ENCODE measurements at regions of chr20 and their contacts with region 1.

Region 1: DNA sequence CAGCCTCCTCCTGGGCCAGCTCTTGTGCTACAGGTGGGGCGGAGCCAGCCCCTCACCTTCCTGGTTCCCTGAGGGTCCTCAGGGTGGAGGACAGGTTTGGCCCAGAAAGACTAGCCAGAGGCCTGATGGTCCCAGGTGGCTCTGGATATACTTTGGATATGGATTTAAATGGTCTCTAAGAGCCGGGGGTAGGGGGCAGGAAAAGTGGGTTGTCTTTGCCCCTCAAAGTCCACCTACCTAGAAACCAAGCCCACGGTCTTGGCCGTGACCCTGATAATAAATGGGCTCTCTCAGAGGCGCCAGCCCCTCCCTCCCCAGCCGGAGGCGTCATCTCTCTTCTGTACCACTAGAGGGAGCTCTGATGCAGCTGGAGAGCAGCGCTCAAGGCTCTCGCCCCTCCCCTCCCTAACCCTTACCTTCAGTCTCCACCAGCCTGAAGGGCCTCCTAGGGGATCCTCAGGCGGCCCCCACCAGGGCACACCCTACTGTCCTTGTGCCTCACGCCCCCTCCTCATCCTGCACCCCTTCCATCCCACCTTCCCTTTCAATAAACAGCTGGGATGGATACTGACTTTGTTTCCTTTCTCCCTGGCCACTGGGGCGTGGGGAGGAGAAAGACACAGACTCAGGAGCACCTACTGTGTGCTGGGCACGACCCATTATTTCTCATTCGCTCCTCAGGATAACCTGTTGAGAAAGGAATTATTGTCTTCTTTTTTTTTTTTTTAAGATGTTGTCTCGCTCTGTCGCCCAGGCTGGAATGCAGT is 7.6 kb downstream of the NRSN2 start:
- DNase-seq: peak; percentile 70 to 71
- H3K4me3 ChIP-seq: no peak overlapping the region
- H3K27ac ChIP-seq: no peak overlapping the region
- H3K4me1 ChIP-seq: peaks cover 14 to 22% of the 10 kb centered on the region in 2 donors
- H3K27me3 ChIP-seq: no peaks in the 10 kb centered on the region
- CTCF ChIP-seq: peak; percentile 83 to 96 (median 94)
- POLR2A ChIP-seq: no peak

Region 2: GRCh38 chr20:407133-407952 is 52.9 kb after region 1 on chr20:
- intact Hi-C with region 1: loop called (anchors 10 kb)
- DNase-seq: peak; percentile 73 to 78
- H3K4me3 ChIP-seq: peak overlapping the region in 2 of 3 donors; percentile 36 to 98
- H3K27ac ChIP-seq: peak overlapping the region in 2 of 3 donors; percentile 4 to 96
- H3K4me1 ChIP-seq: peaks cover 8 to 19% of the 10 kb centered on the region in 2 donors
- H3K27me3 ChIP-seq: no peaks in the 10 kb centered on the region
- CTCF ChIP-seq: peak in 3 of 6 experiments; percentile 2 to 7 (median 3)
- POLR2A ChIP-seq: peak in 1 of 2 donors; percentile 50

Region 3: GRCh38 chr20:431012-431904 is 76.8 kb after region 1 on chr20:
- intact Hi-C with region 1: loop called (anchors 10 kb)
- DNase-seq: peak; percentile 89 to 90
- H3K4me3 ChIP-seq: no peak overlapping the region
- H3K27ac ChIP-seq: no peak overlapping the region
- H3K4me1 ChIP-seq: no peaks in the 10 kb centered on the region
- H3K27me3 ChIP-seq: no peaks in the 10 kb centered on the region
- CTCF ChIP-seq: peak; percentile 24 to 93 (median 74)
- POLR2A ChIP-seq: no peak

Region 4: GRCh38 chr20:478949-479429 is 124.5 kb after region 1 on chr20:
- intact Hi-C with region 1: loop called (anchors 5 kb)
- DNase-seq: no peak
- H3K4me3 ChIP-seq: no peak overlapping the region
- H3K27ac ChIP-seq: no peak overlapping the region
- H3K4me1 ChIP-seq: no peaks in the 10 kb centered on the region
- H3K27me3 ChIP-seq: no peaks in the 10 kb centered on the region
- CTCF ChIP-seq: peak in 5 of 6 experiments; percentile 26 to 60 (median 54)
- POLR2A ChIP-seq: no peak

Region 5: GRCh38 chr20:517221-517620 is 162.7 kb after region 1 on chr20:
- intact Hi-C with region 1: no loop called
- DNase-seq: no peak
- H3K4me3 ChIP-seq: no peak overlapping the region
- H3K27ac ChIP-seq: no peak overlapping the region
- H3K4me1 ChIP-seq: peaks cover 23 to 38% of the 10 kb centered on the region in 2 donors
- H3K27me3 ChIP-seq: no peaks in the 10 kb centered on the region
- CTCF ChIP-seq: no peak
- POLR2A ChIP-seq: no peak

Region 6: GRCh38 chr20:645318-646106 is 291.0 kb after region 1 on chr20:
- intact Hi-C with region 1: loop called (anchors 10 kb)
- DNase-seq: peak; percentile 57 to 61
- H3K4me3 ChIP-seq: no peak overlapping the region
- H3K27ac ChIP-seq: no peak overlapping the region
- H3K4me1 ChIP-seq: peaks cover 11 to 12% of the 10 kb centered on the region in 2 donors
- H3K27me3 ChIP-seq: no peaks in the 10 kb centered on the region
- CTCF ChIP-seq: peak; percentile 69 to 95 (median 84)
- POLR2A ChIP-seq: no peak